ENCODE measurements at regions of chr15 and their contacts with region 1.

Region 1: GRCh38 chr15:39686000-39686613 is 96.5 kb downstream of the FSIP1 start:
- DNase-seq: peak; percentile 49 to 78 (median 58)
- ATAC-seq: peak; percentile 94
- H3K4me3 ChIP-seq: no peak overlapping the region
- H3K27ac ChIP-seq: no peak overlapping the region
- H3K4me1 ChIP-seq: peaks cover 0 to 3% of the 10 kb centered on the region in 2 experiments; a peak in 2 of 5 replicates
- H3K27me3 ChIP-seq: no peaks in the 10 kb centered on the region
- CTCF ChIP-seq: peak; percentile 70 to 83 (median 71)
- EP300 ChIP-seq: no peak
- POLR2A ChIP-seq: no peak
- RAD21 ChIP-seq: peak; percentile 93 to 96

Region 2: GRCh38 chr15:39717134-39717533 is 31.0 kb after region 1 on chr15:
- CTCF ChIA-PET with region 1: interaction called, 7 read pairs
- POLR2A ChIA-PET with region 1: no interaction called
- in situ Hi-C with region 1: no loop called
- intact Hi-C with region 1: loop called (anchors 1 kb)
- DNase-seq: no peak
- ATAC-seq: peak; percentile 77; the same call in 2 of the 3 replicates
- H3K4me3 ChIP-seq: no peak overlapping the region
- H3K27ac ChIP-seq: no peak overlapping the region
- H3K4me1 ChIP-seq: no peaks in the 10 kb centered on the region; a peak in 1 of 5 replicates
- H3K27me3 ChIP-seq: no peaks in the 10 kb centered on the region
- CTCF ChIP-seq: peak; percentile 13 to 23 (median 15); a peak in 2 of 6 replicates
- EP300 ChIP-seq: no peak
- POLR2A ChIP-seq: no peak
- RAD21 ChIP-seq: peak in 1 of 2 experiments; percentile 51; a peak in 1 of 4 replicates

Region 3: DNA sequence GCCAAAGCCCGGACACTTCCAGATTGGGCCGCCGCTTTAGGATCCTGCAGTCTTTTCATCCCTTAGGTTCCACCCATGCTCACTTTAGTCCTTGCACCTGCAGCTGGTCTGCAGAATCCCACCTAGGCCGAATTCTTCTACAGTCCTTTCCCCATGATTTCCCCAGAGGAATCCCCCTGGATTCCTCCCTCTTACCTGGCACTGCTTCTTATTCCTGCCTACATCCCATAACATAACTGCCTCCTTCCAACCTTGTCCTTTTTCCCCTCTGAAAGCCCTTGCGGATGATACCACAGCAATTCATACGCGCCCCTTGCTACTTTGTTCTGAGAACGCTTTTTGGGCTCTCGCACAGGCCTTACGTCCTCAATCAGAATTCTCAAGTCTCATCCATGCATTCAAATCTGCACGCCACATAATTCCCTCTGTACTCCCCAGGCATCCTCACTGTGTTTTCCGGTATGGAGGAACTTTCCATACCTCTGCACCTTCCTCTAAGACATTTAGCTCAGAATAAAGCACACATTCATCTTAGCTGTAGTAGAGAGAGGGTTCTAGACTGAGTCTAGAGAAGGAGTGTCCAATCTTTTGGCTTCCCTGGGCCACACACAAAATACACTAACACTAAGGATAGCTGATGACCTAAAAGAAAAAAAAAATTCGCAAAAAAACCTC is 248.4 kb after region 1 on chr15:
- CTCF ChIA-PET with region 1: interaction called, 5 read pairs
- POLR2A ChIA-PET with region 1: no interaction called
- in situ Hi-C with region 1: no loop called
- intact Hi-C with region 1: loop called (anchors 5 kb)
- DNase-seq: peak in 1 of 4 experiments; percentile 32
- ATAC-seq: peak; percentile 53
- H3K4me3 ChIP-seq: peak overlapping the region; percentile 74
- H3K27ac ChIP-seq: peak overlapping the region; percentile 66
- H3K4me1 ChIP-seq: peaks cover 3 to 11% of the 10 kb centered on the region in 2 experiments; a peak in 4 of 5 replicates
- H3K27me3 ChIP-seq: no peaks in the 10 kb centered on the region
- CTCF ChIP-seq: no peak
- EP300 ChIP-seq: no peak
- POLR2A ChIP-seq: no peak
- RAD21 ChIP-seq: no peak

Measured in K562 (cell line).